Endothelial cell of umbilical vein (primary cell): ENCODE measurements at regions of chr3 and their contacts with region 1.

Region 1: DNA sequence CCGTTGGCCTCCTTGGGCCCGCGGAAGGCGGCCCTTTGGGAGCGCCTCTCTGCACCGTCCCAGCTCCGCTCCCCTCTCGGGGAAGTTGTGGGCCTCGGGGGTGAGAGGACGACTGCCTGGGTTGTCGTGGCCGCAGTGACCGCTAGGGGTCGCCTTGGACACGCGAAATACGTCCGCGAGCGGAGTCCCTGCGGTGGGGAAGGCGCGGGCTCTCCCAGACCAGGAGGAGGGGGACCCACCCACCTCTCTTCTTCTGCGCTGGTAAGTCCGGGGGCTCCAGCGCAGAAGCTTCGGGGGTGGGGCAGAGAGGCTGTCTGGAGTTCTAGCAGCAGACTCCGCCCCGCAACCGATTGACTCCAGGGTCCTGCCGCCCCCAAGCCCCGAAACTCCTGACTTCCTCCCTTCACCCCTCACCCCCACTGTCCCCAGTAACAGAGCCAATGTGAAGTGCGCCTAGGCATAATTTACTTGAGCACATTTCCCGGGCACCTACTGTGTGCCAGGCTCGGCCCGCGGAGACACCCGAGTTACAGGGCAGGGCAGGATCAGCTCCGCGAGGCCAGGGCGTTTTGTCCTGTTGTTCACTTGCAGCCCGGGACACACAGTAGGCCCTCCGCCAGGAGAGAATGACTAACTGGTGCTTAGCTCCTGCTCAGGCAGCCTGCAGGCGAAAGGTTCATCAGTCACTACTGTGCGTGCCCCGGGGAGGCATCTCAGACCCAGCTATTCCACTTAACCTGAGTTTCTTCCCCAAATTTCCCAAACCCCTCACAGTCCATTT is 32.8 kb downstream of the DNASE1L3 start:
- DNase-seq: peak; percentile 79
- H3K4me3 ChIP-seq: peak overlapping the region in 2 of 3 experiments; percentile 8 to 22
- H3K27ac ChIP-seq: no peak overlapping the region
- H3K4me1 ChIP-seq: peaks cover 34% of the 10 kb centered on the region
- H3K27me3 ChIP-seq: no peaks in the 10 kb centered on the region
- CTCF ChIP-seq: peak; percentile 89 to 97
- POLR2A ChIP-seq: peak; percentile 36

Region 2: GRCh38 chr3:58093573-58094195 is 84.3 kb before region 1 on chr3:
- CTCF ChIA-PET with region 1: no interaction called
- POLR2A ChIA-PET with region 1: no interaction called
- dilution Hi-C with region 1: no loop called
- intact Hi-C with region 1: no loop called
- DNase-seq: peak; percentile 49
- H3K4me3 ChIP-seq: no peak overlapping the region
- H3K27ac ChIP-seq: peak overlapping the region; percentile 35
- H3K4me1 ChIP-seq: peaks cover 6% of the 10 kb centered on the region
- H3K27me3 ChIP-seq: no peaks in the 10 kb centered on the region
- CTCF ChIP-seq: no peak
- POLR2A ChIP-seq: no peak

Region 3: GRCh38 chr3:58167431-58168351 is 10.2 kb before region 1 on chr3:
- CTCF ChIA-PET with region 1: interaction called, 11 read pairs
- POLR2A ChIA-PET with region 1: no interaction called
- dilution Hi-C with region 1: no loop called
- intact Hi-C with region 1: no loop called
- DNase-seq: peak; percentile 64
- H3K4me3 ChIP-seq: no peak overlapping the region
- H3K27ac ChIP-seq: no peak overlapping the region
- H3K4me1 ChIP-seq: peaks cover 22% of the 10 kb centered on the region
- H3K27me3 ChIP-seq: no peaks in the 10 kb centered on the region
- CTCF ChIP-seq: peak; percentile 90 to 93
- POLR2A ChIP-seq: no peak

Region 4: DNA sequence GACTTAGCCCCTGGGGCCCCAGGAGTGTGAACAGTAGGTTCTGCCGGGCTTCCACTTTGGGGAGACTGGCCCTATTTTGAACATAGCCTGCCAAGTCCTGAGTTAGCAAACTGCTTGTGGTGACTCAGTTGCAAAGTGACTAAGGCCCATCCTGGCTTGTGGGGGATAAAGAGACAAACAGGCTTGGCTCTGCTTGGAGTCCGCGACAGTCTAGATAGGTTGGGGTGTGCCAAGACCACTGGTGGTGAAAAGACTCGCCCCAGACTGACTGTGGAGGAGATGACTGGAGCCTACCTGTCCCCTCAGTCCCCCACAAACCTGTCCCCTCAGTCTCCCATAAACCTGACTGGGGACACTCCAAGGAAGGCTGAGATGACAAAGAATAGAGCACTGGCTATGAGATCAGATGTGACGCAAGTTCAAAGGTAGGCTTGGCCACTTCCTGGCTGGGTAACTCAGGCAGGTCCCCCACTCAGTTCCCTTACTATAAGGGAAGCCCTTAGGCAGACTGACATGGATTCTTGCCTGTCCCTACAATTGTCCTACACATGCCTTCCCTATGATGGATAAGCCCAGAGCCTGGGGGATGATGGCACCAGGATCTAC is 28.6 kb after region 1 on chr3:
- CTCF ChIA-PET with region 1: interaction called, 14 read pairs
- POLR2A ChIA-PET with region 1: no interaction called
- dilution Hi-C with region 1: no loop called
- intact Hi-C with region 1: no loop called
- DNase-seq: no peak
- H3K4me3 ChIP-seq: no peak overlapping the region
- H3K27ac ChIP-seq: no peak overlapping the region
- H3K4me1 ChIP-seq: peaks cover 3% of the 10 kb centered on the region
- H3K27me3 ChIP-seq: no peaks in the 10 kb centered on the region
- CTCF ChIP-seq: no peak
- POLR2A ChIP-seq: no peak

Region 5: GRCh38 chr3:58299839-58300516 is 122.0 kb after region 1 on chr3:
- CTCF ChIA-PET with region 1: interaction called, 369 read pairs
- POLR2A ChIA-PET with region 1: no interaction called
- dilution Hi-C with region 1: no loop called
- intact Hi-C with region 1: no loop called
- DNase-seq: peak; percentile 70
- H3K4me3 ChIP-seq: no peak overlapping the region
- H3K27ac ChIP-seq: no peak overlapping the region
- H3K4me1 ChIP-seq: no peaks in the 10 kb centered on the region
- H3K27me3 ChIP-seq: peaks cover 17 to 18% of the 10 kb centered on the region in 2 experiments
- CTCF ChIP-seq: peak; percentile 33 to 37
- POLR2A ChIP-seq: no peak